Posterior vena cava (tissue), 2 donors: ENCODE measurements at regions of chr19 and their contacts with region 1.

Region 1: DNA sequence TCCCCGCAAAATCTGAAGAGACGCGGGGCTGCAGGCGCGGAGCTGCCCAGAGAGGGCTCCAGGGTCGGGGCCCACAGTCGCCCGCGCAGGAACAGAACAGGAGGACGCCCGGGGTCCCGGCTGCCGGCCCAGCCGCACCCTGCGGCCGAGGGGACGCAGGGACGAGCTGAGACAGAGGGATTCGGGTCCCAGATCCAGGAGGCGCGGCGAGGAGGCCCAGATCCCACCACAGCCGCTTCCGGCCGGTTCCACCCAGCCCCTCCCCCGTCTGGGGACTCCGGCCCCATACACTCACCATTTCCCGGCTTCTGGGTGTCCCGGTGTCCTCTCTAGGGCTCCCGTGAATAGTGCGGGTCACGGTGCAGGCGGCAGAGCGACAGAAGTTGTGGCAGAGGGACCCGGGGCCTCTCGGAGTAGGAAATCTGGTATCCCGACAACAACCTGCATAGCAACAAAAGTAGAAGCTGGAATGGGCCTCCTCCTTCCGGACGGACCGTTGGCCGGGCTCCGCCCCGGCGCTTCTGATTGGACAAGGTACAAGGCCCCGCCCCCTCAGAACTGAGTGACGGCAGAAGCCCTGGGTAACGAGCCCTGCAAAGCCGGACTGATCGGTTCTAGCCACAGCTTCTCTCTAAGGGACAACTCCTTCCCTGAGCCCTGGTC is at the start of gene ZNF20:
- DNase-seq: peak; percentile 99
- total RNA-seq, gene ZNF20: 1.0 to 3.2 TPM

Region 2: DNA sequence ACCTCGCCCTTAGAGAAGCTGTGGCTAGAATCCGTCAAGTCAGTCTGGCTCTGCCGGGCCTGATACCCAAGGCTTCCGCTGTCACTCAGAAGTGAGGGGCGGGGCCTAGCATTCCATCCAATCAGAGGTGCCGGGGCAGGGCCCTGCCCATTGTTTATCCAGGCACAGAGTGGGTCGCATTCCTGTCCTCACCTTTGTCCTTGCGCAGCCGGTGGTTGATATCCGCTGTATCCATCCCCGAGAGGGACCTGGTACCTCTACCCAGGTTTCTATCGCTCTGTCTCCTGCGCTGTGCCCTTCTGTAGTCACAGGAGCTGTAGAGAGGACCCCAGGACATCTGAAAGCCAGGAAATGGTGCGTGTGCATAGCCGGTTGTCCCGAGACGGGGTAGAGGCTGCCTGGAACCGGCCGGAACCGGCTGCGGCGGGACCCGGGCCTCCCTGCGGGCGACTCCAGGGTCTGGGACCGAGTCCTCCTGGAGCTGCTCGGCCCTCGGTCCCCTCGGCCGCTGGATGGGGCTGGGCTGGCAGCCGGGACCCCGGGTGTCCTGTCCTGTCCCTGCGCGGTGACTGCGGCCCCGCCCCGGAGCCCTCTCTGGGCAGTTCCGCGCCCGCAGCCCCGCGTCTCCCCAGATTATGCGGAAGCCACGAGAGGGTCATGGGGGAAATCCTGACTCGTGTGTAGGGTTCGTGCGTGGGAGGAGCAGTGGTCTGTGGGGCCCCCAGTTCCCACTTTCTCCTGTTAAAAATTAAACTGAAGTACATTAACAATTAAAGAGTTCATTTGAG is 175.0 kb before region 1 on chr19 and contains the start of gene ZNF763:
- intact Hi-C with region 1: loop called in 1 of 2 experiments (anchors 5 kb)
- DNase-seq: peak; percentile 97
- total RNA-seq, gene ZNF763: 1.7 to 2.4 TPM

Region 3: GRCh38 chr19:12055783-12056182 is 84.2 kb before region 1 on chr19:
- intact Hi-C with region 1: loop called (anchors 2 to 5 kb)
- DNase-seq: no peak

Region 4: GRCh38 chr19:12230751-12231733 is 91.0 kb after region 1 on chr19:
- intact Hi-C with region 1: no loop called
- DNase-seq: no peak